ENCODE measurements at regions of chrX and their contacts with region 1.

Region 1: DNA sequence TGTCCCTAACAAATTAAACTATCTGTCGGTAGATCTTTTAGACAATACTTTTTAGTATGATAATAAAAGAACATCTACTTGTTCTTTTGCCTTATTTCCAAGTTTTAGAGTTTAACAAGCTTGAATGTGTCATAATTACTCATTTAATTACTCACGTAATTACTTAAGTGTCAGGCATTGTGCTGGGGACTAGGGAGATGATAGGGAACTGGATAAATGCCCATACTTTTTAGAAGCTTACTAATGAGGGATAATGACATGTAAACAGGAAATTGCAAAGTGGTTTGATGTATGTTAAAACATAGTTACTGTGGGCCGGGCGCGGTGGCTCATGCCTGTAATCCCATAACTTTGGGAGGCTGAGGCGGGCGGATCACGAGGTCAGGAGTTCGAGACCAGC is 158.3 kb downstream of the DMD start:
- DNase-seq: no peak
- CTCF ChIP-seq: no peak

Region 2: GRCh38 chrX:32966956-32967355 is 86.0 kb before region 1 on chrX:
- in situ Hi-C with region 1: loop called (anchors 25 kb)
- DNase-seq: no peak
- CTCF ChIP-seq: no peak

Measured in GM13976 (cell line).